A673 (cell line): ENCODE measurements at regions of chr14 and their contacts with region 1.

Region 1: GRCh38 chr14:68862954-68863594 is 70.2 kb upstream of the ZFP36L1 start:
- DNase-seq: peak; percentile 86
- H3K4me3 ChIP-seq: no peak overlapping the region
- H3K27ac ChIP-seq: no peak overlapping the region
- H3K4me1 ChIP-seq: no peaks in the 10 kb centered on the region
- H3K27me3 ChIP-seq: no peaks in the 10 kb centered on the region
- CTCF ChIP-seq: peak; percentile 87

Region 2: DNA sequence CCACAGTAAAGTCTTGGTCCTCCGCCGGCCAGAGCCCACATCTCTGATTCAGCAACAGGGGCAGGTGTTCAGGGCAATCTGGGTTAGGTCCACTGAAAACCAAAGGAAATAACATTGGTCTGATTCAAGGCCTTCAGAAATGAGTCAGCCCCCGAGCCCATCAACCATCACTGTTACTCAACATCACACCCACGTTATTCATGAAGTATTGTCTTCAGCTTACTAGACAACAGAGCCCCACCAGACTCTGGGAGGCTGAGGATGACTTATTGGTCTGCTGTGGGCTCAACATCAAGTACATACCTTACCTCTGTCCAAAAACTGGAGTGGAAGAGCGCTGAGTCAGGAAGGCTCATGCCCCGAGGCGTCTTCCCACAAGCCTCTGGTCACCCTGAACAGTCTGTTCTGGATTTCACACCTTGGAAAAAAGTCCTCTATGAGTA is 167.7 kb before region 1 on chr14:
- CTCF ChIA-PET with region 1: no interaction called
- POLR2A ChIA-PET with region 1: no interaction called
- intact Hi-C with region 1: no loop called
- DNase-seq: peak; percentile 33
- H3K4me3 ChIP-seq: no peak overlapping the region
- H3K27ac ChIP-seq: no peak overlapping the region
- H3K4me1 ChIP-seq: peaks cover 17% of the 10 kb centered on the region
- H3K27me3 ChIP-seq: no peaks in the 10 kb centered on the region
- CTCF ChIP-seq: no peak

Region 3: DNA sequence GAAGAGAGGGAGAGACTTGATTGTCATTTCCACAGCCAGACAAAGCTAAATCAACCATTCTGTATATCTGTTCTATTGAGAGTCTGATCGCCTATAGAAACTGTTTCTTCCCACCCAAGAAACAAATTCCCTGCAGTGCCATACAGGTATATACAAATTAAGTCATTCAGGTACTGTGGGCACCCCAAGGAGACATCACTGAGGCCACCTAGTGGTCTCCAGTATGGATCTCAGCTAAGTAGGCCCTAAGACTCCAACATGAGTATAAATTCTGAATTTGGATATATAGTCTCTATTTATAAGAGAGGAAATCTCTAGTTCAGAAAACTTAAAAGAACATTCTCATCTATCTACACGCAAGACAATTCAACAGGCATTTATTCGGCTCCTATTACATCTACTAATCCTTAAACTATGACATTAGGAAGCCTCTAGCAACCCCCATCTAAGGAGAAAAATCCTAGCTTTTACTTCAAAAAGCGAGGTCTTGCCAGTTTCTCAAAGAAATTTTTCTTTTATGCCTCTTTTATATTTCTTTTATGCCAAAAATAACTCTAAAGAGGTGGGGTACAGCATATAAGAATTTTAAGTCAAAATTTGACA is 227.2 kb after region 1 on chr14:
- CTCF ChIA-PET with region 1: interaction called, 3 read pairs
- POLR2A ChIA-PET with region 1: no interaction called
- intact Hi-C with region 1: loop called (anchors 1 kb)
- DNase-seq: peak; percentile 19
- H3K4me3 ChIP-seq: no peak overlapping the region
- H3K27ac ChIP-seq: no peak overlapping the region
- H3K4me1 ChIP-seq: peaks cover 4% of the 10 kb centered on the region
- H3K27me3 ChIP-seq: no peaks in the 10 kb centered on the region
- CTCF ChIP-seq: peak; percentile 77

Region 4: GRCh38 chr14:69107407-69108003 is 244.4 kb after region 1 on chr14:
- CTCF ChIA-PET with region 1: interaction called, 17 read pairs
- POLR2A ChIA-PET with region 1: no interaction called
- intact Hi-C with region 1: loop called (anchors 1 kb)
- DNase-seq: peak; percentile 72
- H3K4me3 ChIP-seq: no peak overlapping the region
- H3K27ac ChIP-seq: no peak overlapping the region
- H3K4me1 ChIP-seq: no peaks in the 10 kb centered on the region
- H3K27me3 ChIP-seq: no peaks in the 10 kb centered on the region
- CTCF ChIP-seq: peak; percentile 68